ENCODE measurements at regions of chr12 and their contacts with region 1.

Region 1: GRCh38 chr12:95217377-95218149 is at the starts of genes FGD6 and VEZT:
- DNase-seq: peak; percentile 99
- ATAC-seq: peak; percentile 93
- H3K4me3 Mint-ChIP-seq: peak within 1 kb of the TSS; percentile 93
- H3K27ac Mint-ChIP-seq: peak within 1 kb of the TSS; percentile 95
- H3K4me1 Mint-ChIP-seq: peaks cover 28% of the 10 kb centered on the region
- H3K27me3 Mint-ChIP-seq: peaks cover 5% of the 10 kb centered on the region
- total RNA-seq, gene FGD6: 0.56 to 0.91 TPM
- total RNA-seq, gene VEZT: 36.9 to 52.3 TPM

Region 2: GRCh38 chr12:95117178-95117599 is 100.4 kb before region 1 on chr12:
- CTCF ChIA-PET with region 1: interaction called, 16 read pairs
- DNase-seq: peak; percentile 70
- ATAC-seq: peak; percentile 88
- H3K4me3 Mint-ChIP-seq: no peak overlapping the region
- H3K27ac Mint-ChIP-seq: no peak overlapping the region
- H3K4me1 Mint-ChIP-seq: peaks cover 10% of the 10 kb centered on the region
- H3K27me3 Mint-ChIP-seq: no peaks in the 10 kb centered on the region

Region 3: DNA sequence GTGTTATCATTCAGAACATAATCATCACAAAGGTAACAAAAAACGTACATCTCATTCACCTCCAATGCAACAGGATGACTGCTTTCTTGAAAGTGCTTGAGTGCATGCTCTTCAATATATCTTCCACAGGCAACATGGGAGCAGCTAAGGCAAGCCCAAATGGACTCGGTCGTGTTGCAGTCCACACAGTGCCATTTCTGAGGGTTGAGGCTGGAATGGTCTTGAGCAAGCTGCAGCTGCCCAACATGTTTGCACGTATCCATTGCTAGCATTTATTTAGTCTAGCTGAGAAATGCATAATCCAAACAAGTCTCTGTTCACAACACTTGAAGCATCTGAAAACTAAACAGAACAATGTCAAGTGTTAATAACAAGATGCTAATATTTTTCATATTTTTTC is 316.4 kb after region 1 on chr12:
- CTCF ChIA-PET with region 1: interaction called, 10 read pairs
- DNase-seq: no peak
- ATAC-seq: no peak
- H3K4me3 Mint-ChIP-seq: no peak overlapping the region
- H3K27ac Mint-ChIP-seq: no peak overlapping the region
- H3K4me1 Mint-ChIP-seq: peaks cover 2% of the 10 kb centered on the region
- H3K27me3 Mint-ChIP-seq: no peaks in the 10 kb centered on the region